Dorsolateral prefrontal cortex (tissue), 120 donors: ENCODE measurements at regions of chr4 and their contacts with region 1.

Region 1: GRCh38 chr4:151099229-151099975 is at the start of gene RPS3A:
- DNase-seq: peak; percentile 93 to 97 (median 96)
- H3K4me3 ChIP-seq: peak within 1 kb of the TSS; percentile 51 to 96 (median 83)
- H3K27ac ChIP-seq: peak within 1 kb of the TSS; percentile 26 to 95 (median 84)
- H3K27me3 ChIP-seq: no peaks in the 10 kb centered on the region
- CTCF ChIP-seq: peak; percentile 67 to 99 (median 96)
- total RNA-seq, gene RPS3A: 289 to 622 (median 457) TPM

Region 2: GRCh38 chr4:151015459-151016347 is 83.7 kb before region 1 on chr4:
- intact Hi-C with region 1: loop called in 1 of 2 experiments (anchors 2 kb)
- DNase-seq: peak; percentile 58 to 88 (median 81)
- H3K4me3 ChIP-seq: peak overlapping the region; percentile 67 to 99 (median 97)
- H3K27ac ChIP-seq: peak overlapping the region; percentile 60 to 98 (median 95)
- H3K27me3 ChIP-seq: no peaks in the 10 kb centered on the region
- CTCF ChIP-seq: peak in 5 of 56 donors; percentile 2 to 20 (median 10)

Region 3: DNA sequence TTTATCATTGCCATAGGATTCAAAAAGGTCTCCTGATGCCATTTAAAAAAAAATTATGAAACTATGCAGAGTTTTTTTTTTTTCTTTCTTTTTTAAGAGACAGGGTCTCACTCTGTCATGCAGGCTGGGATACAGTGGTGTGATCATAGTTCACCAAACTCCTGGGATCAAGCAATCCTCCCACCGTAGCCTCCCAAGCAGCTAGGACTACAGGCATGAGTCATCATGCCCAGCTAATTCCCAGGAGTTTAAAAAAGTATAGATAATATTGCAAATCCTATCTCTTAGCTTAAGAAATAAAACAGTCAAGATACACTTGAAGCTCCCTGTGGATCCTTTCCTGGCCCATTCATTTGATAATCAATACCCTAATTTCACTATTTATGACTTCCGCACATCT is 118.9 kb after region 1 on chr4:
- intact Hi-C with region 1: no loop called
- DNase-seq: no peak
- H3K4me3 ChIP-seq: no peak overlapping the region
- H3K27ac ChIP-seq: peak overlapping the region in 5 of 59 donors; percentile 2 to 42 (median 31)
- H3K27me3 ChIP-seq: no peaks in the 10 kb centered on the region
- CTCF ChIP-seq: no peak

Region 4: DNA sequence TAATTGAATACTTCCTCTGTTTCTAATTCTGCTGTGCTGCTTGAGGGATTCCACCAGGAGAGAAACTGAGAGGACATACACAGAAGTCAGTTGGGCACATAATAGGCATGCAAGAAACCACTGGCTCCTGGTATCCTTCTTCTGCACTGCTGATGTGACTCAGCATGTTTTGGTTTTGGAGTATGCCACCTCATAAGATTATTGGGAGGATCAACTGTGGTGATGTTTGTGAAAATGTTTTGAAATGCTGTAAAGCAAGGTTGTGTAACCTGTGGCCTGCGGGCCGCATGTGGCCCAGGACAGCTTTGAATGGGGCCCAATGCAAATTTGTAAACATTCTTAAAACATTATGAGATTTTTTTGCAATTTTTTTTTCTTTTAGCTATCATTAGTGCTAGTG is 541.8 kb after region 1 on chr4:
- intact Hi-C with region 1: no loop called
- DNase-seq: no peak
- H3K4me3 ChIP-seq: no peak overlapping the region
- H3K27ac ChIP-seq: peak overlapping the region in 10 of 59 donors; percentile 0 to 34 (median 14)
- H3K27me3 ChIP-seq: no peaks in the 10 kb centered on the region
- CTCF ChIP-seq: no peak

Region 5: DNA sequence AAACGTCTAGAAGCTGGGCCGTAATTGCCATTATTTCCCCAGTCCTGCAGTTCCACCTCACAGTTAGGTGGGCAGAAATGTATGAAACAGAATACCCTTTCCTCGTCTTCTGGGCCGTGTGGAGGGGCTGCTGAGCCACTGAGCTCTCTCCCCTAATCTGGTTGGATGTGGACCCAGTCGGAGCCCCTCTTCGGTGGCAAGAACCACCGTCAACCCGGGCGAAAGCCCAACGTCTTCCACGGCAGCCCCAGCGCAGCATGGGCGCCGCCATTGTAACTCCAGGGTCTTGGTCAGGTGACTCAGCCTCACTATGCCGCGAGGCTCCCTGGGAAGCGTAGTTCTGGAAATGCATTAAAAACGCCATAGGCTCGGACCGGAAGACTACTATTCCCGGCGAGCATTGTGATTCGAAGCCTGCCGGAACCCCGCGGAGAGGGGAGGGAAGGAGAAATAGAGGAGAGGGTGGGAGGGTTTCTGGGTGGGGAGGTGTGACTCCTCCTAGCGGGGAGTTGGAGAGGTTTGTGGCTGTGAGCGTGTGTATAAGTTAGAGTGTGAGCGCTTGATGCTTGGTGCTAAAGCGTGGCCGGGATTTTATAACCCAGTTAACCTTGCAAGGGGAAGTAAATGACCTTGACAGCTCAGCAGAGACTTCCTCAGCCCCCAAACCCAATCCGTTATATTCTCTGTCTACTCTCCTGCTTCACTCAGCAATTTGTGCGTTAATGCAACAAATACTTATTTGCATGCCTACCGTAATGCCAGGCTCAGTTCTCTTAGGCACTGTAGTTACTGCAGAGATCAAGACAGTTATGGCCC is 661.5 kb after region 1 on chr4 and contains the start of gene GATB:
- intact Hi-C with region 1: loop called in 1 of 2 experiments (anchors 5 kb)
- DNase-seq: peak; percentile 91 to 99 (median 96)
- H3K4me3 ChIP-seq: peak within 1 kb of the TSS; percentile 61 to 98 (median 85)
- H3K27ac ChIP-seq: peak within 1 kb of the TSS in 57 of 59 donors; percentile 7 to 93 (median 81)
- H3K27me3 ChIP-seq: peaks cover 0 to 4% (median 0%) of the 10 kb centered on the region in 45 donors
- CTCF ChIP-seq: peak in 55 of 56 donors; percentile 32 to 82 (median 69)
- total RNA-seq, gene GATB: 36.7 to 100 (median 63.1) TPM